PC-9 (cell line): ENCODE measurements at regions of chr5 and their contacts with region 1.

Region 1: DNA sequence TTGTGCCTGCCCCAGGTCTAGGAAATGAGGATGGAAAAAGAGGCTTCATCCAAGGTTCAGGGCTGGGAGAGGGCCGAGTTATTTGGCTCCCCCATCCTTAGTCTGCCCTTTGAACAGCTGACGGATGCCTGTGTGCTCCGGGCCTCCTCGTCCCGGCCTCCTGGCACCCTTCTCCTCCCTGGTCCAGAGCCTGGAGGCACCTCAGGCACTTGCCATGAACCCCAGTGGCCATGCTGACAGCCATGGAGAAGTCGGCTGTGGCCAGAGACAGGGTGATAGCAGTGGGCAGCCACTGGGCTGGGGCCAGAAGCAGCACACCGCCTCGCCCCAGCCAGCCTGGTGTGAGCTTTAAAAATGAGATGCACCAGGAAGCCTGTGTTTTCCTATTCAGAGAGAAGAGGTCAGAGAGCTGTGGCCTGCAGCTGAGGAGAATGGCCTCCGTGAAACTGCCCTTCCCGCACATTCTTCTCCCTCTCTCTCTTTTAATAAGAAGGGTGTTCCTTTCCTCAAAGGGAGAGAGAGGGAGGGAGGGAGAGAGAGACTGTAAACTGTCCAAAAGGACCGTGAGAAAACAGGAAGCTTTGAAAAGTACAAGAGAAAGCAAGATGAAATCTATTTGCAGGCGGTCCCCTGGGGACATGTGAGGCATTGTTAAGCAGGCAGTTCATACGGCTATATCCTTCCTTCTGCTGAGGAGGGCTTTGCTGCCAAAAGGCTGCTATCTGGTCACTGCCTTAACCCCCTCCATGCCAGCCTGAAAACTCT is 55.3 kb downstream of the ZNF366 start:
- DNase-seq: peak; percentile 63 to 77
- H3K4me3 ChIP-seq: no peak overlapping the region
- H3K27ac ChIP-seq: peak overlapping the region; percentile 95
- H3K4me1 ChIP-seq: peaks cover 33% of the 10 kb centered on the region
- H3K27me3 ChIP-seq: no peaks in the 10 kb centered on the region
- CTCF ChIP-seq: no peak

Region 2: GRCh38 chr5:72397836-72398235 is 54.1 kb before region 1 on chr5:
- CTCF ChIA-PET with region 1: interaction called, 5 read pairs
- POLR2A ChIA-PET with region 1: interaction called, 13 read pairs
- intact Hi-C with region 1: no loop called
- DNase-seq: peak in 1 of 2 experiments; percentile 46
- H3K4me3 ChIP-seq: no peak overlapping the region
- H3K27ac ChIP-seq: peak overlapping the region; percentile 71
- H3K4me1 ChIP-seq: peaks cover 35% of the 10 kb centered on the region
- H3K27me3 ChIP-seq: no peaks in the 10 kb centered on the region
- CTCF ChIP-seq: no peak

Region 3: GRCh38 chr5:72518001-72518683 is 66.2 kb after region 1 on chr5:
- CTCF ChIA-PET with region 1: no interaction called
- POLR2A ChIA-PET with region 1: no interaction called
- intact Hi-C with region 1: loop called (anchors 1 kb)
- DNase-seq: no peak
- H3K4me3 ChIP-seq: no peak overlapping the region
- H3K27ac ChIP-seq: no peak overlapping the region
- H3K4me1 ChIP-seq: peaks cover 25% of the 10 kb centered on the region
- H3K27me3 ChIP-seq: no peaks in the 10 kb centered on the region
- CTCF ChIP-seq: no peak

Region 4: DNA sequence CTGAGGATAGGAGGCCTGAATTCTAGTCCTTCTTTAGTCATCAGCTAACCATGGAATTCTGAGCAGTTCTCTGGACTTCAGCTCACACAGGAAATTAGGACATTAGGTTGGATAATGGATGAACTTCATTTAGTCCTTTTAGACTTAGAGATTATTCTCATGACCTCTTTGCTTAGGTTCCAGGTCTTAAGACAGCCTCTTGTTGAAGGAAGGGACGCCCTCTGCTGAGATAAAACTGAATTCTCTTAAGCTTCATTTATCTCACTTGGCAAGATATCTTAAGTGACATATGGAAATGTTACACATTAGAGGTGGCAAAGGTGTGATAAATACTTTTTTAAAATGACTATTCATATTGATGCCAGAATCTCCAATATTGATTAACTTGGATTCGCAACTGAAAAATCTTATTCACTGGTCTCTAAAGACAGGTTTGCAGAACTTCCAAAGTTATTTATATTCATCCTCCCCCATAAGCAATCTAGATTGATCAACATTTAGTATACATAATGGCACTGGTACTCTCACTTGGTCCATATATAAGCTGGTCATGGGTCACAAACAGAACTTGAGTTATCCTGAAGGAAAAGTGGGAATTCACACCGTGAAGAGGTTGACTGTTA is 72.1 kb after region 1 on chr5:
- CTCF ChIA-PET with region 1: interaction called, 3 read pairs
- POLR2A ChIA-PET with region 1: no interaction called
- intact Hi-C with region 1: loop called (anchors 2 kb)
- DNase-seq: peak in 1 of 2 experiments; percentile 67
- H3K4me3 ChIP-seq: no peak overlapping the region
- H3K27ac ChIP-seq: no peak overlapping the region
- H3K4me1 ChIP-seq: peaks cover 13% of the 10 kb centered on the region
- H3K27me3 ChIP-seq: no peaks in the 10 kb centered on the region
- CTCF ChIP-seq: peak; percentile 76